GM18951 (cell line): ENCODE measurements at regions of chr10 and their contacts with region 1.

Region 1: GRCh38 chr10:30687698-30688219 is 58.2 kb upstream of the LYZL2 start:
- POLR2A ChIP-seq: no peak

Region 2: DNA sequence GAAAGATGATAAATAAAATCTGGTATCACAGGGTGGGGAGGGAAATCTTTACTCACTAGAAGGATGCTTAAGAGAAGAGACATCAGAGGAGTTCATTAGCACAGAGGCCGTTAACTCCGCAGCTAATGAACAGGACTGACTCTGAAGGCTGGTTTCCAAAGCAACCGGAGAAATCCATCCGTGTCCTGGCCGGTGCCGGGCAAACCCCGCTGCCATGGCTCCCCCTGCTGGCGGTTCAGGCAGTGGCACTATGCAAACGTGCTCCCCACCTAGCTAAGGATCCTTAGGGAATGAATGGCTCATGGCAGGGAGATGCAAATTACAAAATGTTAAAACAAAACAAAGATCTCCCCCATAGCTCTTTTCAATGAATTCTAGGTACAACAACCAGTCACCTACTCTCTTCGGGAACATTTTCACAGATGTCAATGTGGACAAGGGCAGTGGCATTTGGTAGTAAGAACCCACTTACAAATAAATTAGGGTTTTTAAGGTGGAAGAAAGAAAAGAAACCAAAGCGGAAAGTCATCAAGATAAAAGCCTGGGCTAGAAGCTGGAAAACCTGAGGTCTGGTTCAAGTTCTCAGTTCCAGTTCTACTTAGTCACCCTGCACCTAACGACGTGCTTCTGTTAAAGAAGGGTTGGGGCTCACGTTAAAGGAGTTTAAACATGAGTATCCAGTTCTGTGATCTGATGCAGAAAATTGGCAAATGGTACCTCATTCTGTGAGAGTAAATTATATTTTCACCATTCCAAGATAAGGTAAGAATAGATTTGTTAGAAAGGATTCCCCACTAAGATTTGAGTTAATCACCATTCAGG is 1191.2 kb before region 1 on chr10:
- in situ Hi-C with region 1: loop called (anchors 10 kb)
- POLR2A ChIP-seq: no peak

Region 3: GRCh38 chr10:30862486-30862885 is 174.7 kb after region 1 on chr10:
- in situ Hi-C with region 1: no loop called
- POLR2A ChIP-seq: no peak

Region 4: GRCh38 chr10:31940839-31941653 is 1253.3 kb after region 1 on chr10:
- in situ Hi-C with region 1: no loop called
- POLR2A ChIP-seq: no peak